Right cardiac atrium (tissue), 5 donors: ENCODE measurements at regions of chr1 and their contacts with region 1.

Region 1: DNA sequence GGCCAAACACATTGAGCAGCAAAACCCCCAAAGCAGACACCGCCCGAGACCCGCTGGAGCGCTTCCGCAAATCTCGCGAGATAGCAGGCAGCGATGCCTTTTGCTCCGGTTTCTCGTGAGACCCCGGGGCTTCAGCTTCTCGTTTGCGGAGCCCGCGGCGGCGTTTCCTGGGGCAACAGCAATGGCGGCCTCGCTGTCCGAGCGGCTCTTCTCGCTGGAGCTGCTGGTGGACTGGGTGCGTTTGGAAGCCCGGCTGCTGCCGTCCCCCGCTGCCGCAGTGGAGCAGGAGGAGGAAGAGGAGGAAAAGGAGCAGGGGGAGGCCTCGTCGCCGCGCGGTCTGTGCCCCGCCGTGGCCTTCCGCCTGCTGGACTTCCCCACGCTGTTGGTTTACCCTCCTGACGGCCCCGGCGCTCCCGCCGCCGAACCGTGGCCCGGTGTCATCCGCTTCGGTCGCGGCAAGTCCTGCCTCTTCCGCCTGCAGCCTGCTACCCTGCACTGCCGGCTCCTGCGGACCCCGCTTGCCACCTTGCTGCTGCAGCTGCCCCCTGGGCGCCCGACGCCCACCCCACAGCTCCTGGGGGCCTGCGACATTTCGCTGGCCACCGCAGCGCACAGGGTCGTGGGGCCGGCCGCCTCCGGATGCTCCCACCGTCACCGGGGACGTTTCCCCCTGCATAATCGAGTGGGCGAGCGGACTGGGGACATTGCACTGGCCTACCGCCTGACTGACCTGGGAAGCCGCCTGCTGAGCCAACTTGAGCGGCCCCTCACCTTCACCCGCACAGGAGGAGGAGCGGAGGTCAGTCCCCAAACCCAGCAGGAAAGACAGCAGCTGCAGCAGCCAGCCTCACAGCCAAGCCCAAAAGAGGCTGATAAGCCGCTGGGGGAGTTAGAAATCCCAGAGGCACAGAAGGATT is at the start of gene MAP10:
- DNase-seq: peak; percentile 83 to 92 (median 90)
- ATAC-seq: peak; percentile 92 to 93
- H3K4me3 ChIP-seq: peak within 1 kb of the TSS; percentile 72
- H3K27ac ChIP-seq: peak within 1 kb of the TSS; percentile 95
- H3K4me1 ChIP-seq: peaks cover 3% of the 10 kb centered on the region
- H3K27me3 ChIP-seq: no peaks in the 10 kb centered on the region
- total RNA-seq, gene MAP10: 2.6 to 4.3 (median 4.0) TPM

Region 2: DNA sequence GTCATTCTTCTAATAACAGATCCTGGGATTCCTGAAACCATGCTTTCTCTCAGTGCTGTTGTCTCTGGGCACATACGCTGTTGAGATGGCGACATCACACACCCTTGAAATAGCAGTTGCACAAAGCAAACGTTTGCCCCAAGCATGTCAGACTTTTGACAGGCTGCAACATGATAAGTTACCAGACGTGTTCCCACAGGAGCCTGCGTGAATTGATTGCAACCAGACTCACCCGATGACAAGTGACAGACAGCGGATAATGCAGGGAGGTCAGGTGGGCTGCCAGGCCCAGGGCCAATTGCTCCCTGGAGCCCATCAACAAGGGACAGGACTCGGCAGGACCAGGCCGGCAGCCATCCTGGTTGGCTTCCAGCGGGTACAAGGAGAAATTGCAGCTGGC is 486.5 kb before region 1 on chr1:
- intact Hi-C with region 1: no loop called
- DNase-seq: peak; percentile 78 to 93 (median 90)
- ATAC-seq: peak; percentile 93
- H3K4me3 ChIP-seq: no peak overlapping the region
- H3K27ac ChIP-seq: peak overlapping the region; percentile 96
- H3K4me1 ChIP-seq: no peaks in the 10 kb centered on the region
- H3K27me3 ChIP-seq: no peaks in the 10 kb centered on the region

Region 3: DNA sequence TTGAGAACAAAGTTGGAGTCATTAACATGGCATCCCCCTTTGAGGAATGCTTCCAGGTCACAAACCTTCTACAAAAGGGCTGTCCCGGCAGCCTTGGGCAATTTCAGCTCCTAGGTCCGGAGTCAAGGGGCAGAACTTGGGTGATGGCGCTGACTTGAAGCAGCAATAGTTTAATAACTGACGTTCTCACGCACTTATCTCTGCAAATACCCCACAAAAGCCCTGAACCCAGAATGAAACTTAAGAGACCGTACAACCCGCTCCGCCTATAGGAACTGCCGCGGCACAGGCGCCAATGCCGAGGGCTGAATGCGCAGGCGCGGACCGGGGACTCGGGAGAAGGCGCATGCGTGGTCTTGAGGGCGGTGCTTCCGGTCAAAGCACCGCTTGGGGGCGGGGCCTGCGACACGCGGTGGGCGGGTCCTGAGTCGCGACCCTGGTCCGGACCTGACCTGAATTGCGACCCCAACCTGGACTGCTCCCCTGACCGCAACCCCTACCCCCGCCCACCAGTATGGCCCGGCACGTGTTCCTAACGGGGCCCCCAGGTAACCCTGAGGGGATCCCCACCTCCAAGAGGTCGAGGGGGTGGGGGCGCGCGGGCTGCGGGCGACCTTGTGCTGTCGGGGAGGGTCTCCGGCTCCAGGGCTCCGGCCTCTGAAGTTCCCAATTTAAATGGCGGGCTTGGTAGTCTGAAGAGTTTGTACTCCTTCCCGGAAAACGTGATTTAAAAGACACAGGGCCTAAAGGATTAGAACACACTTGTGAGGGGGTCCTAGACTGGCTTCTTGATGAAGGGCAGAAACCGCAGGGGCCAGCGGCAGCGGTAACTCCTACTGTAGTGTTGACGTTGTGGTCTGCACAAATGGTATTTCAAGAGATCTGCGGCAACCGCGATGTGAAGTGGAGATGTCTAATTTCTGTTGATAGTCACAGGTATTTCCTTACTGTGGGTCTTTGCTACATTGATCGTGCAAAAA is 145.0 kb after region 1 on chr1 and contains the start of gene NTPCR:
- intact Hi-C with region 1: loop called in 1 of 4 experiments (anchors 10 kb)
- DNase-seq: peak; percentile 95 to 98 (median 97)
- ATAC-seq: peak; percentile 95 to 97
- H3K4me3 ChIP-seq: peak within 1 kb of the TSS; percentile 79
- H3K27ac ChIP-seq: peak within 1 kb of the TSS; percentile 82
- H3K4me1 ChIP-seq: peaks cover 5% of the 10 kb centered on the region
- H3K27me3 ChIP-seq: no peaks in the 10 kb centered on the region
- total RNA-seq, gene NTPCR: 55.7 to 67.5 (median 56.8) TPM